ENCODE measurements at regions of chr2 and their contacts with region 1.

Region 1: GRCh38 chr2:223993621-223994232 is 36.5 kb downstream of the MRPL44 start:
- DNase-seq: peak; percentile 77
- H3K4me3 ChIP-seq: no peak overlapping the region
- CTCF ChIP-seq: peak; percentile 77

Region 2: DNA sequence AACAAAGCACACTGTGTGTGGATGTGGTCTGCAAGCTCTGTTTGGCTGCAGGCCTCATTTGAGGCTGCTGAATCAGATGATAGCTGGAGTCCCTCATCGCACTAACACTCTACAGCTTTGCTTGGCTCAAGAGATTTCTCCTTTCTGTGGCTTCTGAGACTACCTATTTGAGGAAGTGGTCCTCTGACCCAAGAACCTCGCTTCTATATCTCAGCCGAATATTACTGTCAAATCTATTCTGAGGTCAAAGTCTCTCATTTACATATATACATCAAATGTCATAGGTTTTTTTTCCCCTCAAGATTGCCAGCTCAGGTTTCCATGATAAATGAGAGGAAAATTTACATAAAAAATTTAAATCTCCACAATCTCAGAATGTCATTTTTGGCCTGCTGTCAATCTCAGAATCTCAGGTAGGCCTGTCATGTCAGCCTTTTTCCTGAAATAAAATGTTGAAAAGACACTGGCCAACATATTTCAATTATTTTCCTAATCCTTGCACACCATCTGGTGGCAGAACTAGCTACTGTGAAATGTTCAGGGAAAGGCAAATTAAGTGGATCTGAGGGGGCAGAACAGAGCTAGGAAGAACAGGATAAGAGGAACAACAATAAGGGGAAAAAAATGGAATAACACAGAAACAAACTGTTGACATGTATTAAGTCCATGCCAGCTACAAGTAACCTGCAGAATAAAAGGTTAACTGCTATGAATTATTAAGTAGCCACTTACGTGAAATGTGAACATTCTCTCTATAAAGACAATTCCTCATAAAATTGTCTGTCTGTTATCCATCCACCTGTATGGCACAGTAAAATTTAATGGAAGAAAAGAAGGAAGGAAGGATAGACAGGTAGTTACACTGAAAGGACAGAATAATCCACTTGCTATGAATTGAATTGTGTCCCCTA is 195.7 kb before region 1 on chr2:
- in situ Hi-C with region 1: no loop called
- DNase-seq: peak; percentile 62
- H3K4me3 ChIP-seq: no peak overlapping the region
- CTCF ChIP-seq: peak; percentile 67

Region 3: GRCh38 chr2:224284134-224284946 is 290.6 kb after region 1 on chr2:
- in situ Hi-C with region 1: loop called (anchors 25 kb)
- DNase-seq: no peak
- H3K4me3 ChIP-seq: no peak overlapping the region
- CTCF ChIP-seq: peak; percentile 58

Measured in astrocyte of the cerebellum (primary cell).